Heart left ventricle (tissue), 16 donors: ENCODE measurements at regions of chr5 and their contacts with region 1.

Region 1: DNA sequence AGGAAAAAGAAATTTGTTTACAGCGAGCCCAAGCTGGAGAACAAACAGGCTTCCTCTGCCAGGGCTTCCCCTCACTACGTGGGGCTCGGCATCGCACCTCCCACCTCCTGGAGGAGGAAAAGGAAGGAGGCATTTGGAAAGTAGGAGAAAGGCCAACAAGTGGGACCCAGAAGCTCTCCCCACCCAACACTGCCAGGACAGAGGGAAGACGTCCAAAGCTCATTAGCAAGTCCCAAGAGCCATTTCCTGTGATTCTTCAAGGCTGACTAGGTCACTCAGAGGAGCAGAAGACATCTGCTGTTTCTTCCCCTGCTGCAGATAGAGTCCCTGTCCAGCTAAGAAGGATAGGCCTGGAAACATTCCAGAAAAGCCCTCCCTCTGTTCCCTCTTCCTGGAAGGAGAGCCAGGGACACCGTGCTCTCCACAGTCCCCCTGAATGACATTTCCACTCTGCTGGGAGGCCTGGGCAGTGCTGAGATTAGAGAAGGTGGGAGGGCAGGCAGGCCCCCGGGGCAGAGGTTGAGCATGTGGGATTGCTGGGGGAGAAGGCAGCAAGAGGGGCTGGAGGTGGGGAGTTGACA is 57.0 kb upstream of the NEURL1B start:
- DNase-seq: peak; percentile 73 to 80 (median 79)
- ATAC-seq: peak; percentile 81 to 89 (median 86)
- H3K4me3 ChIP-seq: no peak overlapping the region
- H3K27ac ChIP-seq: peak overlapping the region; percentile 73 to 97 (median 87)
- H3K4me1 ChIP-seq: peaks cover 0 to 79% (median 49%) of the 10 kb centered on the region in 12 donors
- H3K27me3 ChIP-seq: no peaks in the 10 kb centered on the region
- CTCF ChIP-seq: no peak
- POLR2A ChIP-seq: no peak

Region 2: GRCh38 chr5:172479044-172479783 is 104.8 kb before region 1 on chr5:
- intact Hi-C with region 1: loop called in 3 of 10 experiments (anchors 2 to 5 kb)
- DNase-seq: peak; percentile 88 to 93 (median 89)
- ATAC-seq: peak; percentile 88 to 97 (median 96)
- H3K4me3 ChIP-seq: peak overlapping the region in 7 of 12 donors; percentile 8 to 39 (median 23)
- H3K27ac ChIP-seq: peak overlapping the region in 11 of 12 donors; percentile 31 to 81 (median 72)
- H3K4me1 ChIP-seq: peaks cover 0 to 27% (median 12%) of the 10 kb centered on the region in 12 donors
- H3K27me3 ChIP-seq: no peaks in the 10 kb centered on the region
- CTCF ChIP-seq: peak; percentile 75 to 97 (median 89)
- POLR2A ChIP-seq: no peak

Region 3: GRCh38 chr5:172502969-172503368 is 81.1 kb before region 1 on chr5:
- intact Hi-C with region 1: loop called in 6 of 10 experiments (anchors 1 to 5 kb)
- DNase-seq: peak in 2 of 5 donors; percentile 7 to 12
- ATAC-seq: no peak
- H3K4me3 ChIP-seq: no peak overlapping the region
- H3K27ac ChIP-seq: peak overlapping the region; percentile 35 to 97 (median 85)
- H3K4me1 ChIP-seq: peaks cover 0 to 30% (median 16%) of the 10 kb centered on the region in 12 donors
- H3K27me3 ChIP-seq: no peaks in the 10 kb centered on the region
- CTCF ChIP-seq: no peak
- POLR2A ChIP-seq: no peak

Region 4: DNA sequence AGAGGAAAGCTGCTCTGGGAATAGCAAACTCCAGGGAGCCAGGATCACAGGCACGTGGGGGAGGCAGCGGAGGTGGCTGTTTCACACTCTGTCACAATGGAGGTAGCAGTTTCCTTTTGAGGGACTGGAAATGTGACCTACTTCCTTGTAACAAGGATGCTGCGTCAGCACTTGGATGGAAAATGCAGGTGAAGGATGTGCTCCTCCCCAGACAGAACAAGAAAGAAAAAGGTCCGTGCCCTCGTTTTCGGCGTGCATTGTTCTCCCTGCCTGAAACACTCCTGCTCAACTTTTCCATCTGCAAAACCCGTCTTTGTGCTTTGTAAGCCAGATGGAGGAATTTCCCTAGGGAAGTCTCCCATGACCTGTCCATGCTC is 74.6 kb before region 1 on chr5:
- intact Hi-C with region 1: loop called in 6 of 10 experiments (anchors 1 to 5 kb)
- DNase-seq: peak in 4 of 5 donors; percentile 70 to 77 (median 76)
- ATAC-seq: peak; percentile 41 to 85 (median 68)
- H3K4me3 ChIP-seq: no peak overlapping the region
- H3K27ac ChIP-seq: peak overlapping the region; percentile 28 to 91 (median 78)
- H3K4me1 ChIP-seq: peaks cover 0 to 34% (median 16%) of the 10 kb centered on the region in 12 donors
- H3K27me3 ChIP-seq: no peaks in the 10 kb centered on the region
- CTCF ChIP-seq: no peak
- POLR2A ChIP-seq: no peak

Region 5: GRCh38 chr5:172533399-172534228 is 50.4 kb before region 1 on chr5:
- intact Hi-C with region 1: loop called in 1 of 10 experiments (anchors 2 kb)
- DNase-seq: peak in 2 of 5 donors; percentile 19 to 46
- ATAC-seq: peak; percentile 78 to 95 (median 83)
- H3K4me3 ChIP-seq: no peak overlapping the region
- H3K27ac ChIP-seq: peak overlapping the region; percentile 45 to 88 (median 72)
- H3K4me1 ChIP-seq: peaks cover 10 to 48% (median 25%) of the 10 kb centered on the region in 12 donors
- H3K27me3 ChIP-seq: no peaks in the 10 kb centered on the region
- CTCF ChIP-seq: peak in 1 of 12 donors; percentile 5
- POLR2A ChIP-seq: no peak